ENCODE measurements at regions of chr1 and their contacts with region 1.

Region 1: GRCh38 chr1:172398970-172399755 is 21.3 kb upstream of the C1orf105 start:
- DNase-seq: peak; percentile 61 to 75 (median 66)
- ATAC-seq: peak; percentile 89 to 92
- H3K4me3 ChIP-seq: peak overlapping the region; percentile 28
- H3K27ac ChIP-seq: peak overlapping the region; percentile 45
- H3K4me1 ChIP-seq: peaks cover 4% of the 10 kb centered on the region
- H3K27me3 ChIP-seq: no peaks in the 10 kb centered on the region

Region 2: DNA sequence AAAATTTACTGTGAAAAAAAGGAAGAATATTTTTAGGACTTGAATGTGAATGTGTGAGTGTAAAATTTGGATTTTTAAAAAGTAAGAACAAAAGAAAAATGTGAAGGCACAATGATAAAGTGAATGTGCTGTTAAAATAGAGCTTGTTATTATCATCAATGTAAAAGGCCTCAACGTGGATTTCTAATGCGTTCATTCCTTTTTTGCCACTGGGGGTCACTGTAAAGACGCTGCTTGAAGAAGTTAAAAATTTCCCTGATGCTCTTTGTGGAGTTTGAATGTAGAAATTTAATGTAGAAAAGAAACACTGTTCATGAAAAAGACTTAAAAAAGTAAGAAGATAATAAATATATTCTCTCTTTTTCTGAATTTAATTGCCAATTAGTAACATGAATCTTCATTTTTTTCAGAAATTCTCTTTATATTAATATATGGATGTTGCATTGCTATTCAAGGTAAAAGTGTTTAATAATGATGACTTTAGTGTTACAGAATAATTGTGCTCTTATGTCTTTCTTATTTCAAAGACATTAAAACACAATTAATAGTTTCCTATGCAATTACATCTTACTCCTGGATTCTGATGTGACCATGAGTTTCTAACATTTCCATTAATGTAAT is 396.3 kb before region 1 on chr1:
- intact Hi-C with region 1: loop called in 2 of 4 experiments (anchors 10 kb)
- DNase-seq: no peak
- ATAC-seq: no peak
- H3K4me3 ChIP-seq: no peak overlapping the region
- H3K27ac ChIP-seq: no peak overlapping the region
- H3K4me1 ChIP-seq: no peaks in the 10 kb centered on the region
- H3K27me3 ChIP-seq: no peaks in the 10 kb centered on the region

Region 3: GRCh38 chr1:172089768-172090510 is 309.2 kb before region 1 on chr1:
- intact Hi-C with region 1: loop called in 2 of 4 experiments (anchors 5 kb)
- DNase-seq: peak; percentile 30 to 79 (median 58)
- ATAC-seq: peak; percentile 71
- H3K4me3 ChIP-seq: no peak overlapping the region
- H3K27ac ChIP-seq: no peak overlapping the region
- H3K4me1 ChIP-seq: no peaks in the 10 kb centered on the region
- H3K27me3 ChIP-seq: no peaks in the 10 kb centered on the region

Region 4: GRCh38 chr1:172144445-172145061 is 254.6 kb before region 1 on chr1:
- intact Hi-C with region 1: loop called in 3 of 4 experiments (anchors 10 kb)
- DNase-seq: peak; percentile 82 to 90 (median 88)
- ATAC-seq: peak; percentile 98
- H3K4me3 ChIP-seq: peak overlapping the region; percentile 54
- H3K27ac ChIP-seq: peak overlapping the region; percentile 82
- H3K4me1 ChIP-seq: no peaks in the 10 kb centered on the region
- H3K27me3 ChIP-seq: no peaks in the 10 kb centered on the region

Region 5: GRCh38 chr1:172745014-172745413 is 345.9 kb after region 1 on chr1:
- intact Hi-C with region 1: no loop called
- DNase-seq: no peak
- ATAC-seq: peak; percentile 70 to 82
- H3K4me3 ChIP-seq: no peak overlapping the region
- H3K27ac ChIP-seq: no peak overlapping the region
- H3K4me1 ChIP-seq: peaks cover 5% of the 10 kb centered on the region
- H3K27me3 ChIP-seq: no peaks in the 10 kb centered on the region

Measured in right cardiac atrium (tissue), 5 donors.